ENCODE measurements at regions of chr1 and their contacts with region 1.

Region 1: DNA sequence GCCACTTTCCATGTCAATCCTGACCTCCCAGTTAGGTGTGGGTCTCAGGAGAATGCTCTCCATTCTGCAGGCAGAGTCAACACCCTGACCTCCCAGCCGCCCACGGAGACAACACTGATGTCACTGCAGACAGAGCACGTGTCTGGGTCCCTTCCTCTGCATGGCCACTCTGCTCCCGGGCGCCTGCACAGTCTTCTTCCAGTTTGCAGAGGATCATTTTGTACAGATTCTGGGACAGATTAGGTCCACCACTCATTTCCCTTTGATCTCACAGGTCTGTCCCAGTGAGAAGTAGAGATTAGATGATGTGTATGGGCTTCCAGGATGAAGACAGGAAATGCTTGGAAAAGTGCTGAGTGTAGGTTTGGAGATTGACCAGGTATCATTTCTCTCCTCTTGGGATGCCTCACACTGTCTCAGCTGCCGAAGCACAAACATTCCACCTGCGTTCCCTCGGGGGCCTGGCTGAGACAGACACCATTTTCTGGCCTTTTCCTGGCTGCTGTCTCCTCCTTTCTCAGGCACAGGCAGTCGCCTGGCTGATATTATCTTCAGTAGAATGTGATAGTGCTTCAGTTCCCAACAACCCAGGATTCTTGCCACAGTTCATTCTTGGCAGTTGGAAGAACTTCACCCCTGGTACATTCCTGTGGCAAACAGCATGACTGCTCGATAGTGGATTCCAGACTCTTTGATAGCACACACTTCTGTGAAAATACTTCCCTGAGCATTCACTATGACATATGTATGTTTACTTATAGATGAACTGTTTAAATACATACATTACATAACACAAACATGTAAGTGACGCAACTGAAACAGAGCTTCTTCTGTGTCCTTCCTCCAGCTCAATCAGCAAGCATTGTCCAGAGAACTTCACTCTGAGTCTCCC is 7.9 kb downstream of the MYBPHL start:
- DNase-seq: peak in 4 of 5 donors; percentile 63 to 74 (median 72)
- ATAC-seq: peak; percentile 56 to 81 (median 72)
- H3K4me3 ChIP-seq: no peak overlapping the region
- H3K27ac ChIP-seq: peak overlapping the region in 11 of 12 donors; percentile 17 to 77 (median 68)
- H3K4me1 ChIP-seq: peaks cover 0 to 31% (median 25%) of the 10 kb centered on the region in 12 donors
- H3K27me3 ChIP-seq: peaks cover 0 to under 1% (median 0%) of the 10 kb centered on the region in 9 donors
- CTCF ChIP-seq: no peak
- POLR2A ChIP-seq: no peak

Region 2: DNA sequence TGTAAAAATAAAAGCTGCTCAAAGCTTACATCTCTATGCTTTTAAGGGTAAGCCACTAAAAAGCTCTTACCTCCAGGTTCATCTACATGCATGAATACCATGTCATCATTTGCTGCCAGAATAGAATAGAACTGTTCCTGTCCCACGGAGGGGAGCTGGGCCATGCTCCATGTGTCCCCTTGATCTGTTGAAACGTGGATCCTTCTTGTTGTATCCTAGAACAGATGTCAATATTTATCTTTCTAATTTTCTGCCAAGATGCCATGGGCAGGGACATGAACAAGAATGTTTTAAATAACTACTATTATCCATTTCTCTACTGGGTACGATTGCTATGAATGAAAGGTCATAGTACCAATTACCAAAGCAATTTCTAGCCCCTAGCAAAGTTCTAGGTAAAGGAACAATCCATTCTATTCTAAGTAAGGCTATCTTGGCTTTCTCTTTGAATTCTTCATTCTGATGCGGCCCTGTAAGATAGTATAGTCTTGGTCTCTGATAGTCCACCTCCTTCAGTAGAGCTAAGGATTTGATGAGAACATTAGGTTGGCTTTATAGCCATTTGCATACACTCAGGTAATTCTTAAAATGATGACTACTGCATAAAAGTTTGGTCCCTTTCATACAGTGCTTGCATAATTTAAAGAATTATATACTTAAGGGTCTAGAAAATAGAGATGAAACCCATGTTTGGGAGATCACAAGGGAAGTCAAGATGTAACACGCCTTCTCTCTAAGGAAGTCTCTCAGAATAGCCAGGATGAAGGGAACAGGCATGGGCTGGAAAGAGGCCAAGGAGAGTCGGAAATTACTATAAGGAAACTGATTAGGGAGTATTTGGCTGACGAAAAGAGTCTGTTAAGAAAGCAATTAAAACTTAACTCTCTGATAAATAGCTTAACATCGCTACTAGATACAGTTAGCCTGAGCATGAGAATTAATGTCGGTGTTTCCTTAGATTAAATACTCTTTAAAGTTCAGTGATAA is 43.3 kb after region 1 on chr1:
- intact Hi-C with region 1: loop called in 1 of 10 experiments (anchors 10 kb)
- DNase-seq: peak in 1 of 5 donors; percentile 15
- ATAC-seq: peak in 1 of 4 donors; percentile 34
- H3K4me3 ChIP-seq: no peak overlapping the region
- H3K27ac ChIP-seq: no peak overlapping the region
- H3K4me1 ChIP-seq: peaks cover 0 to 19% (median 10%) of the 10 kb centered on the region in 12 donors
- H3K27me3 ChIP-seq: no peaks in the 10 kb centered on the region
- CTCF ChIP-seq: no peak
- POLR2A ChIP-seq: no peak